Left colon (tissue), 2 donors: ENCODE measurements at regions of chr21 and their contacts with region 1.

Region 1: GRCh38 chr21:43728467-43729390 is 9.8 kb downstream of the PDXK start:
- DNase-seq: peak; percentile 79 to 92
- ATAC-seq: peak; percentile 21

Region 2: DNA sequence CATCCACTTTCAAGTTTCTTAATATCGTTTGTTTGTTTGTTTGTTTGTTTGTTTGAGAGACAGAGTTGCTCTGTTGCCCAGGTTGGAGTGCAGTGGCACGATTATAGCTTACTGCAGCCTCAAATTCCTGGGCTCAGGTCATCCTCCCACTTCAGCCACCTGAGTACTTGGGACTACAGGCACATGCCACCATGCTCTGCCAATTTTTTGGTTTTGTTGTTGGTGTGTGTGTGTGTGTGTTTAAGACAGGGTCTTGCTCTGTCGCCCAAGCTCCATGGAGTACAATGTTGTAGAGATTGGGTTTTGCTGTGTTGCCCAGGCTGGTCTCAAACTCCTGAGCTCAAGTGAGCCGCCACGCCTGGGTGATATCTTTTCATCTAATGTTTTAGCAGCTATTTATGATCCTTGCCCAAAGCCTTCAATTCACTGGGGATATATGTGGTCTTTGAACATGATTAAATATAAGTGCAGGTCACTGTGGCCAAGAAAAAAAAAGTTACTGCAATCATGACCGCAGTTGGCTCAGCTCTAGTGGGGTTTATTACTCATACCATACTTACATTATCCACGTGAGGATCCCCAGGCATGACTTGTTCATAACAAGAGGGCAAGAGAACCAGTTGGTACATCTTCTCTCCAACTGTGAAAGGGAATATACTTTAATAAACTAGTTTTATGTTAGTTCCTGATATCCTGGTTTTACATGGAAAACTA is 61.4 kb before region 1 on chr21:
- intact Hi-C with region 1: loop called in 1 of 2 experiments (anchors 10 kb)
- DNase-seq: no peak
- ATAC-seq: no peak

Region 3: GRCh38 chr21:43789276-43790009 is 60.7 kb after region 1 on chr21 and contains the start of gene RRP1:
- intact Hi-C with region 1: loop called (anchors 10 kb)
- DNase-seq: peak; percentile 77 to 93
- ATAC-seq: peak; percentile 90
- total RNA-seq, gene RRP1: 13.0 to 18.5 TPM

Region 4: DNA sequence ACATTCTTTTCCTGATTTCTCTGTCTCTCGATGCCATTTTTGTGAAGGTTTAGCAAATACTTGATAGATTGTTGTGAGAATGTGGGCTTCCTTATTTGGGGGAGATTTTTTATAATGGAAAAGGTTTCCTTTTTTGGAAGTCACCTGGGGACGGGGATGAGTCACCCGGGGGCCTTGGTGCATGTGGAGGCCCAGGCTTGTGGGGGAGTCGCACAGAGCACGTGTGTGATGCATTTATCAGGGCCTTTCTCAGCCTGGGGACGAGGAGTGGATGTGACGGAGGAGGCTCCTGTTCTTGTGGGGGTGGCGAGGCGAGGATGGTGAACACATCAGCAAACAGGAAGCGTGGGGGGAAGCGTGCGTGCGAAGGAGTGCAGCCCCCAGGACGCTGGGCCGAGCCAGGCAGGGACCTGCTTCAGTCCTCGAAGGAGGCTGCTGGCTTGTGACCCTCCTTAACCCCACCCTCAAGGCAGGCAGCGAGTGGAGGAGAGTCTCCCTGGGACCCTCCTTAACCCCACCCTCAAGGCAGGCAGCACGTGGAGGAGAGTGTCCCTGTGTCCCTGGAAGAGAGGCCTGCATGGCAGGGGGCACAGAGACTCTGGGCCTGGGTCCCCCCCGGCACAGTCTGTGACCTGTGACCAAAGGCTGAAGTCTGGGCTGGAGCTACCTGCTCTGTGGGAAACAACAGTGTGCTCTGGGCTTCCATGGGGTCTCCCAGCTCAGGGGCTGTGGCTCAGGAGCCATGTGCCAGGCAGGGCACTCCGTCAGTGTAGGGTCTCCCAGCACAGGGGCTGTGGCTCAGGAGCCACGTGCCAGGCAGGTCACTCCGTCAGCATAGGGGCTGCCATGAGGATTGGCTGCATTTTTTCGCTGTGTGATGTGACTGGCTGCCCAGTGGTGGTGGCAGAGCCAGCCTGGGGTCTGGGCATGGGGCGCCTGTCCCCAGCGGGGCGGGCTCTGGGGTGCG is 193.5 kb after region 1 on chr21:
- intact Hi-C with region 1: no loop called
- DNase-seq: no peak
- ATAC-seq: no peak

Region 5: GRCh38 chr21:44039828-44040227 is 311.1 kb after region 1 on chr21:
- intact Hi-C with region 1: no loop called
- DNase-seq: no peak
- ATAC-seq: no peak